ENCODE measurements at regions of chr12 and their contacts with region 1.

Region 1: GRCh38 chr12:52884526-52885293 is 20.2 kb downstream of the KRT8 start:
- DNase-seq: peak; percentile 66 to 71 (median 67)
- H3K4me3 ChIP-seq: no peak overlapping the region
- H3K4me3 Mint-ChIP-seq: no peak overlapping the region
- H3K27ac ChIP-seq: no peak overlapping the region
- H3K27ac Mint-ChIP-seq: no peak overlapping the region
- H3K4me1 ChIP-seq: peaks cover 5% of the 10 kb centered on the region
- H3K4me1 Mint-ChIP-seq: peaks cover 3 to 7% (median 5%) of the 10 kb centered on the region in 4 donors
- H3K27me3 ChIP-seq: no peaks in the 10 kb centered on the region
- H3K27me3 Mint-ChIP-seq: peaks cover 5 to 9% of the 10 kb centered on the region in 2 donors

Region 2: DNA sequence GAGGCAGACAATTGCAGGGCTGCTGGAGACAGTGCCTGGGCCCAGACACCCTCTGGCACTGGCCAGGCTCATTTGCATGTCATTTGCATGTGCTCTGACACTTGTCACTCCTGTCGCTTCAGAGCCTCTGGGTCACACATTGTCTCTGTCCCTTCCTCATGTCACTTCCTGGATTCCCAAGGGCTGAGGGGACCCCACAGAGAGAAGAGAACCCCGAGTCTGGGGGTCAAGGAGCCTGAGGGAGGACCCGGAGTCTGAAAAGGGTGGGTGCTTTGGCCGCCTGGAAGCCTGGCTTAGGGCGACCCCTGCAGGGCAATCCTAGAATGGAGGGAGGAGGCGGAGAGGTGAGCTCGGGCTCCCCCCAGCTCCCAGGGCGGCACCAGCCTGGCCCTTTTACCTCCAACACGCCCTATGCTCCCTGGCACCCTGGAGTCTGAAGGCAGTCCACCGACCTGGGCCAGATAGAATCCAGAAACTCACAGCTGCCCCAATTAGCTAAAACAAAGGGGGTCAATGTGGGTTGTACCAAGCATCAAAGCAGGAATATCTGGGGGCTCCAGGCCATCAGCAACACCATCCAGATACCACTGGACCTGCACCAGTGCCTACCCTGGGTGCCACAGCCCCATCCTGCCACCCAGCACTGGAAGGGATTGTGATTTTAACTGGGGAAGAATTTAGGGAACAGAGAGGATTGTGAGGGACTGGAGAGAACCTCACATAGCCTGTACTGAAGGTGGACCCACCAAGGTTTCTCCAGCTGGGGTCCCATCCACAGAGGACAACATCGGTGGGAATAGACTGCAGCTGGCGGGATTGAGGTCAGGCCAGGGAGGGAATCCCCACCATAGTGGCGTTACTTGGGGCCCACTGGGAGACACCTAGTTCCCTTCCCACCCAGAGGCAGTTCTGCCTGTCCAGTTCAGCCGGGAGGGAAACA is 14.1 kb before region 1 on chr12:
- CTCF ChIA-PET with region 1: interaction called, 34 read pairs
- POLR2A ChIA-PET with region 1: interaction called, 6 read pairs
- intact Hi-C with region 1: no loop called
- DNase-seq: peak; percentile 66 to 76 (median 72)
- H3K4me3 ChIP-seq: no peak overlapping the region
- H3K4me3 Mint-ChIP-seq: peak overlapping the region in 3 of 8 donors; percentile 16 to 49 (median 22)
- H3K27ac ChIP-seq: no peak overlapping the region
- H3K27ac Mint-ChIP-seq: peak overlapping the region in 4 of 7 donors; percentile 27 to 85 (median 62)
- H3K4me1 ChIP-seq: peaks cover 21% of the 10 kb centered on the region
- H3K4me1 Mint-ChIP-seq: peaks cover 15 to 29% (median 24%) of the 10 kb centered on the region in 4 donors
- H3K27me3 ChIP-seq: no peaks in the 10 kb centered on the region
- H3K27me3 Mint-ChIP-seq: no peaks in the 10 kb centered on the region

Region 3: DNA sequence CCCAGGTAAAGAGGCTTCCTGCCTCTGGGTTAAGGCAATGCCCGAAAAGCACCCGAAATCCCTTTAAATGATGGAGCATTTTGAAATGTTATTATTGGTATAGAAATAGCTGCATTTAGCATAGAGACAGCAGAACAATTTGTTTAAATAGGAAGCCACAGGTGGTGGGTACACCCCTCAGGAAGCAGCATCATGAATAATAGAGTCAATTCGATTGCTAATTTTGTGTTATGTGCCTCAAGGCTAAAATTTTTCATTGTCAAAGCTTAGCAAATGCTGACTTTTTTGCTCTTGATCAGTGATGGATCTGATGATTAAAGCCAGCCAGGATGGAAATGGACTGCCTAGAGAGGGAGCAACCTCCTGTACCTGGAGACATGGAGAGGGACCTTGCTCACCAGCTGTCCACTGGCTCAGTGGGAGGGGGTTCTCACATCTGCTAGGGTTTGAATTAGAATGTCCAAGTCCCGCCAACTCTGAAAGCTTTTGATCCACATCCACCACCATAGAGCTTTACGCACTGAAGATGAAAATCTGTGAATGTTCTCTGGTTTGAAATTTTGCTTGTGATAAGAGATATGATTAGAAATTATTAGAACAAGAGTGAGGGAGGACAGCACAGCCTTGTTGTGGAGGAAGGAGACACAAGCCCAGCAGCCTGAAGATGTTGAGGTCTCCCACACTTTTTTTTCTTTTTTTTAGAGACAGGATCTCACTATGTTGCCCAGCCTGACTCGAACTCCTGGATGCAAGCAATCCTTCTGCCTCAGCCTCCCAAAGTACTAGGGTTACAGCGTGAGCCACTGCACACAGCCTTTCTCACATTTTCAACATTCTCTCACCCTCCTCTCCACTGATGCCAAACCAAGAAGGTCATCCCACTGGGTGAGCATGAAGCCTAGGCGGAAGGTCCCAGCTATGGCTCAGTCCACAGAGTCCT is 24.8 kb after region 1 on chr12:
- CTCF ChIA-PET with region 1: interaction called, 10 read pairs
- POLR2A ChIA-PET with region 1: no interaction called
- intact Hi-C with region 1: no loop called
- DNase-seq: no peak
- H3K4me3 ChIP-seq: no peak overlapping the region
- H3K4me3 Mint-ChIP-seq: no peak overlapping the region
- H3K27ac ChIP-seq: no peak overlapping the region
- H3K27ac Mint-ChIP-seq: no peak overlapping the region
- H3K4me1 ChIP-seq: no peaks in the 10 kb centered on the region
- H3K4me1 Mint-ChIP-seq: peaks cover 0 to 3% (median 1%) of the 10 kb centered on the region in 4 donors
- H3K27me3 ChIP-seq: no peaks in the 10 kb centered on the region
- H3K27me3 Mint-ChIP-seq: peaks cover 6 to 7% of the 10 kb centered on the region in 2 donors

Region 4: DNA sequence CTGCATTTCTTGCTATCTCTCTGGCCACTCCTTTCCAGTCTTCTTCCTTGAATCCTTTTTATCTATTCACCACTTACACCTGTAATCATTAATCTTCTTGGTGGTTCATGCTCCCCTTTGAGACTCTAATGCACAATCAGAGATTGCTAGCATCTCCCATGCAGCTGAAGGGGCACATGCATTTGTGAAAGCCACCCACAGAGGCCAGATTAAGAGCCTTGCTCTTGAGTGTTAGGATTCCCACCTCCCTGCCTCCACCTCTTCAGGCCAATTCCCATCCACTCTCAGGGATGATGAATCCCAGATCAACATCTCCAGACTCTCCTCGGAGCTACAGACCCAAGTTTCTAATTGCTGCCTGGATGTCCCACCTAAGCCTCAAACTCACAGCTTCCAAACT is 44.8 kb after region 1 on chr12:
- CTCF ChIA-PET with region 1: no interaction called
- POLR2A ChIA-PET with region 1: no interaction called
- intact Hi-C with region 1: no loop called
- DNase-seq: no peak
- H3K4me3 ChIP-seq: no peak overlapping the region
- H3K4me3 Mint-ChIP-seq: no peak overlapping the region
- H3K27ac ChIP-seq: no peak overlapping the region
- H3K27ac Mint-ChIP-seq: no peak overlapping the region
- H3K4me1 ChIP-seq: no peaks in the 10 kb centered on the region
- H3K4me1 Mint-ChIP-seq: no peaks in the 10 kb centered on the region
- H3K27me3 ChIP-seq: no peaks in the 10 kb centered on the region
- H3K27me3 Mint-ChIP-seq: peaks cover 5 to 11% of the 10 kb centered on the region in 2 donors

Region 5: DNA sequence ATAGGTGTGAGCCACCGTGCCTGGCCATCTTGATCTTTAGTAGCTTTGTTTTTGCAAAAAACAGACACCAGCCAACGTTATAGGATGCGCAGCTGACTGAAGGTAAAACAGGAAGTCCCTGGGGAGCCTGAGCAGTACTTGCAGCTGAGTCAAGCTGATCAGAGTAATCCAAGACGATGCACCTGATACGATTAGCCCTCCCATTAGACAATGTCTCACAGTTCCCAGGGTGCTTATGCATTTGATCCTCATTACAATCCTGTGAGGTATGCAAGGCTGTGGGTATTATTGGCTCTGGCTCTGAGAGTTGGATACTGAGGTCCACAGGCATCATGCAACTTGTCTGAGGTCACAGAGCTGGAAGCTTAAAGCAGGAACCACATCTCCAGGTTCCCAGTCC is 72.3 kb after region 1 on chr12:
- CTCF ChIA-PET with region 1: interaction called, 10 read pairs
- POLR2A ChIA-PET with region 1: no interaction called
- intact Hi-C with region 1: no loop called
- DNase-seq: no peak
- H3K4me3 ChIP-seq: no peak overlapping the region
- H3K4me3 Mint-ChIP-seq: peak overlapping the region in 1 of 8 donors; percentile 20
- H3K27ac ChIP-seq: no peak overlapping the region
- H3K27ac Mint-ChIP-seq: no peak overlapping the region
- H3K4me1 ChIP-seq: no peaks in the 10 kb centered on the region
- H3K4me1 Mint-ChIP-seq: peaks cover 0 to 4% (median 0%) of the 10 kb centered on the region in 4 donors
- H3K27me3 ChIP-seq: no peaks in the 10 kb centered on the region
- H3K27me3 Mint-ChIP-seq: peaks cover 0 to 3% of the 10 kb centered on the region in 2 donors

Region 6: GRCh38 chr12:52969828-52970569 is 85.3 kb after region 1 on chr12:
- CTCF ChIA-PET with region 1: interaction called, 24 read pairs
- POLR2A ChIA-PET with region 1: no interaction called
- intact Hi-C with region 1: no loop called
- DNase-seq: no peak
- H3K4me3 ChIP-seq: no peak overlapping the region
- H3K4me3 Mint-ChIP-seq: no peak overlapping the region
- H3K27ac ChIP-seq: no peak overlapping the region
- H3K27ac Mint-ChIP-seq: no peak overlapping the region
- H3K4me1 ChIP-seq: no peaks in the 10 kb centered on the region
- H3K4me1 Mint-ChIP-seq: no peaks in the 10 kb centered on the region
- H3K27me3 ChIP-seq: no peaks in the 10 kb centered on the region
- H3K27me3 Mint-ChIP-seq: peaks cover 4 to 9% of the 10 kb centered on the region in 2 donors

Measured in CD4-positive, alpha-beta memory T cell (primary cell).